IMR-90 (cell line): ENCODE measurements at regions of chr5 and their contacts with region 1.

Region 1: GRCh38 chr5:64612344-64612961 is 77.8 kb upstream of the SHISAL2B start:
- DNase-seq: peak; percentile 64
- ATAC-seq: peak; percentile 81
- H3K4me3 ChIP-seq: no peak overlapping the region
- H3K27ac ChIP-seq: no peak overlapping the region
- H3K4me1 ChIP-seq: no peaks in the 10 kb centered on the region
- H3K27me3 ChIP-seq: peaks cover 8% of the 10 kb centered on the region
- CTCF ChIP-seq: peak; percentile 83
- POLR2A ChIP-seq: no peak
- RAD21 ChIP-seq: peak; percentile 81

Region 2: DNA sequence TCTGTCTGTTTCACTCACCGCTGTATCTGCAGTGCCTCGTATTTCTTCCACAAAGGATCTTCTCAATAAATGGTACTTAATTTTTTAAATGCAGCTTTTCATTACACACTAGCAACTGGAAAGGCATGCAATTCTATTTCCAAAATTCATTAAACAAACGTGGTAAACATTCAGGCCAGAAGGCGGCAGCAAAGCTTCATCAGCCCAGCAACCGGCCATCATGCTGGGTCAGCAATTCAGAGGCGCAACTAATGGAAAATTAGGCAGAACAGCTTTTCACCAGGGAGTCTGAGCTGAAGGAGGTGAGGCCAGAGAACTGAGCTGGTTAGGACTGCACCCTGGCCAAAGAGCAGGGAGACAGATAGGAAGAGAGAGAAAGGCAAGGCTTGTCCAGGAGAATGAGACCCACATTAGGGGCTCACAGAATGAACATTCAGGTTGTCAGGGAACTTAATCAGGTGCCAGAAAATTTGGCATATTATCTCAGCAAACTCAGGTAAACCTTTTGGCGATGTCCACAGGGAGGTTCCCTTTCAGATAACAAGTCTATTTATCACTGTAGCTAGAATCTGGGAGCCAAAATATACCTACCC is 464.5 kb before region 1 on chr5:
- CTCF ChIA-PET with region 1: interaction called, 8 read pairs
- POLR2A ChIA-PET with region 1: no interaction called
- dilution Hi-C with region 1: no loop called
- in situ Hi-C with region 1: no loop called
- intact Hi-C with region 1: loop called (anchors 1 kb)
- DNase-seq: peak; percentile 24
- ATAC-seq: peak; percentile 77
- H3K4me3 ChIP-seq: no peak overlapping the region
- H3K27ac ChIP-seq: no peak overlapping the region
- H3K4me1 ChIP-seq: no peaks in the 10 kb centered on the region
- H3K27me3 ChIP-seq: no peaks in the 10 kb centered on the region
- CTCF ChIP-seq: peak; percentile 67
- POLR2A ChIP-seq: no peak
- RAD21 ChIP-seq: peak; percentile 70

Region 3: GRCh38 chr5:64229163-64229774 is 383.2 kb before region 1 on chr5:
- CTCF ChIA-PET with region 1: interaction called, 16 read pairs
- POLR2A ChIA-PET with region 1: no interaction called
- dilution Hi-C with region 1: loop called (anchors 25 kb)
- in situ Hi-C with region 1: loop called (anchors 5 kb)
- intact Hi-C with region 1: loop called (anchors 1 kb)
- DNase-seq: peak; percentile 39
- ATAC-seq: peak; percentile 48; the same call in 1 of the 2 replicates
- H3K4me3 ChIP-seq: no peak overlapping the region
- H3K27ac ChIP-seq: no peak overlapping the region
- H3K4me1 ChIP-seq: no peaks in the 10 kb centered on the region
- H3K27me3 ChIP-seq: no peaks in the 10 kb centered on the region
- CTCF ChIP-seq: peak; percentile 62
- POLR2A ChIP-seq: no peak
- RAD21 ChIP-seq: peak; percentile 51

Region 4: DNA sequence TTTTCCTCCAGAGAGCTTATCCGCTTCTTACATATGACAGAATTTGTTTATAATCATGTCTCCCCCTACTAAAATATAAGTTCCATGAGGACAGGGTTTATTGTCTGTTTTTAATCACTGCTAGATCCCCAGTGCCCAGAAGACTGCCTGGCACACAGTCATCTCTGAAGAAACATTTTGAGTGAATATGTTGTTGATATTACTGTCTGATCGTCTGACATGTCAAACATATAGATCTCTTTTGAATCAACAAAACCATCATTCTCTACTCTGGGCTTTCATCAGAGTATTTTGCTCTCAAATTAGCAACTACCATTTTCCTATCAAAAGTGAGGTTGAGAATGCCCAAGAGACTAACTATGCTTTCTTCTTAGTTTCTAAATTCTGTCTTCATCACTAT is 10.5 kb after region 1 on chr5:
- CTCF ChIA-PET with region 1: interaction called, 11 read pairs
- POLR2A ChIA-PET with region 1: no interaction called
- dilution Hi-C with region 1: no loop called
- in situ Hi-C with region 1: no loop called
- intact Hi-C with region 1: no loop called
- DNase-seq: no peak
- ATAC-seq: no peak
- H3K4me3 ChIP-seq: no peak overlapping the region
- H3K27ac ChIP-seq: no peak overlapping the region
- H3K4me1 ChIP-seq: no peaks in the 10 kb centered on the region
- H3K27me3 ChIP-seq: peaks cover 16% of the 10 kb centered on the region
- CTCF ChIP-seq: no peak
- POLR2A ChIP-seq: no peak
- RAD21 ChIP-seq: no peak

Region 5: GRCh38 chr5:64678374-64678773 is 65.9 kb after region 1 on chr5:
- CTCF ChIA-PET with region 1: interaction called, 11 read pairs
- POLR2A ChIA-PET with region 1: no interaction called
- dilution Hi-C with region 1: no loop called
- in situ Hi-C with region 1: no loop called
- intact Hi-C with region 1: no loop called
- DNase-seq: no peak
- ATAC-seq: no peak
- H3K4me3 ChIP-seq: no peak overlapping the region
- H3K27ac ChIP-seq: no peak overlapping the region
- H3K4me1 ChIP-seq: no peaks in the 10 kb centered on the region
- H3K27me3 ChIP-seq: peaks cover 4% of the 10 kb centered on the region
- CTCF ChIP-seq: no peak
- POLR2A ChIP-seq: no peak
- RAD21 ChIP-seq: no peak

Region 6: GRCh38 chr5:64900618-64901017 is 288.2 kb after region 1 on chr5:
- CTCF ChIA-PET with region 1: no interaction called
- POLR2A ChIA-PET with region 1: no interaction called
- dilution Hi-C with region 1: no loop called
- in situ Hi-C with region 1: no loop called
- intact Hi-C with region 1: no loop called
- DNase-seq: peak; percentile 12
- ATAC-seq: no peak
- H3K4me3 ChIP-seq: no peak overlapping the region
- H3K27ac ChIP-seq: no peak overlapping the region
- H3K4me1 ChIP-seq: no peaks in the 10 kb centered on the region
- H3K27me3 ChIP-seq: no peaks in the 10 kb centered on the region
- CTCF ChIP-seq: no peak
- POLR2A ChIP-seq: no peak
- RAD21 ChIP-seq: no peak